Mammary epithelial cell (primary cell): ENCODE measurements at regions of chr14 and their contacts with region 1.

Region 1: DNA sequence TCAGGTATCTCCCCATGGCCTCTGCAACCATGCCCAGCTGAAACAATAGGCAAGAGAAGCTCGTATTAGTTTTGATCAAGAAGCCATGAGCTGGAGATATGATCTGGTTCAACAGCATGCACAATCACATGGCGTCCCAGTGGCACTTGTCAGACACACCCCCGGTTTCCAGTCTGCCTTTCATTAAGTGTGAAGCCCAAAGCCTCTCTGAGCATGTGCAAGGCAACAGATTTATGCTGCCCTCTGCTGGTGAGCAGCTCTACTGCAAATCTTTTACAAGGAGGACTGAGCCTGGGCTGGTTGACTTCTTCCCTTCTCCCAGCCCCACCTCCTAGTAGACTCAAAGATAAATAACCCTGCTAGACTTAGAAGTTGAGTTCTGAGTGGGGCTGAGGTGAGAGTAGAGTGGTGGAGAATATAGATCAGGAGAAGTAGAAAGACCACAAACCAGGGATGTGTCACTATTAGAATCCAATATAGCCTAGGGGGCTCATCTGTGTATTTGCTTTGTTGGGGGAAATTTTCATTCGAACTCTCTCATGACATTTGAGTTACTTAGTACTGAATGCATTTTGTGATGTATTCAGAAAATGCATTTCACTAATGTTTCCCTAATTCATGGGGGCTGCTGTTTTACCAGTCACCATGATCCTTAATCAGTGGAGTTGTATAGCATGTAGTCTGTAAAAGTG is 53.7 kb upstream of the MBIP start:
- DNase-seq: peak; percentile 66
- H3K4me3 ChIP-seq: no peak overlapping the region
- H3K27ac ChIP-seq: no peak overlapping the region
- H3K4me1 ChIP-seq: no peaks in the 10 kb centered on the region
- H3K27me3 ChIP-seq: no peaks in the 10 kb centered on the region
- CTCF ChIP-seq: peak; percentile 89 to 95

Region 2: DNA sequence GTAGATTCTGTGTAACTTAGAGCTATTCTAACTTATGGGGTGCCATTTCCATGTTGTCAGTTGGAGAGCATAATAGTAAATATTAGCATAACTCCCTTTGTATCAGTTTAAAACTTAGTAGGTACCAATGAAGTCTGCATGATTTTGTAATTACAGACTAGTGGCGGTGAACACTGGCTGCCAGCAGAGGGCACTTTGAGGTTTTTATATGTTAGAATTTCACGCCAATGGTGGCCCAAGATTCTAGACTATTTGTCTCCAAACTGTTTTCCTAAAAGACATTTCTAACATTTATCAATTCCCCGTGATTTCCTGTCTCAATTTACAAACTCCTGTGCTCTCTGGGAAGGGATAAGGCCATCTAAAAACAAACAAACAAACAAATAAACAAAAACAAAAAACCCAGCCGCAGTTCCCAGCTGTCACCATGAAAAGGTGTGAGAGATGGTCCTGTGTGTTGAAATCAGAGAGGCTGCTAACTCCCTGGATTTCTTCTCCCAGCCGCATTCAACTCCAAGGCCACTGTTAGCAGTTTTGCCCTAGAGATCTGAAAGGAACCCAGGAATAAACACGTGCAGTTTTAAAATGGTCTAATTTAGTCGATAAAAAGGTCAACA is 490.3 kb before region 1 on chr14:
- CTCF ChIA-PET with region 1: no interaction called
- dilution Hi-C with region 1: no loop called
- in situ Hi-C with region 1: no loop called
- intact Hi-C with region 1: loop called (anchors 1 kb)
- DNase-seq: no peak
- H3K4me3 ChIP-seq: no peak overlapping the region
- H3K27ac ChIP-seq: no peak overlapping the region
- H3K4me1 ChIP-seq: peaks cover 8% of the 10 kb centered on the region
- H3K27me3 ChIP-seq: no peaks in the 10 kb centered on the region
- CTCF ChIP-seq: peak; percentile 72 to 75

Region 3: DNA sequence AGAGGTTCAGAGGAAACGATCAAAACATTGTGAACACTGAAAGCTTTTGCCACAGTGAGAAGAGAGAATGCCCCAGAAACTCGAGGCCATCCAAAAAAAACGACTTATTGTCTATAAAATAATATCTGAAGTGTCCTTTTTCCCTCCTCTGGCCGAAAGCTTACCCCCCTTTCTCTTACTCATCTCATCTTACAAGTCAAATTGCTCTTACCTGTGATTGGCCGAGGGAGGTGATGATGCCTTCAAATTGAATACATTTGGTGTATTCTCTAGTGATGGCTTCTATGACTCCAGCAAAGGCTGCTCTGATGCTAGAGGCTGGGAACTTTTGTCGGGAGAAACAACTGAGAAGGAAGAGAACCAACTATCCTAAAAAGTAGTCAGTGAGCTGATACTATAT is 288.3 kb before region 1 on chr14:
- CTCF ChIA-PET with region 1: no interaction called
- dilution Hi-C with region 1: no loop called
- in situ Hi-C with region 1: loop called in 1 of 2 experiments (anchors 10 kb)
- intact Hi-C with region 1: no loop called
- DNase-seq: no peak
- H3K4me3 ChIP-seq: no peak overlapping the region
- H3K27ac ChIP-seq: no peak overlapping the region
- H3K4me1 ChIP-seq: peaks cover under 1% of the 10 kb centered on the region
- H3K27me3 ChIP-seq: peaks cover 2% of the 10 kb centered on the region
- CTCF ChIP-seq: no peak

Region 4: DNA sequence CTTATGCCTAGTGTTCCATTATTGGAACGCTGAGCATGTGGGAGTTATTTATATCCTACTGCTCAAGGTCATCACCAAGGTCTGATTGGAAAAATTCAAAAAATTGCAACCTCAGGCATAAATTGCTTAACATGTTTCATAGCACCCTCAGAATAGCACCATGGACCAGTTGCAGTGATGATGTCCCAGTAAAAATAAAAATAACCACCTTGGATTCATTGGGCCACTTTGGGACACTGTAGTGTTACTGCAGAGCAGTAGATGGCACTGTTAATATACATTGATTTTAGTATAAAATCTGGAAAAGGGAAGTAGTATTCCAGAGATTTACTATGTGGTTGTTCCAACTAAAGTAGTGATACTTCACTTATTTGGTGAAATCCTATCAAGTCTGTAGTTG is 166.6 kb before region 1 on chr14:
- CTCF ChIA-PET with region 1: no interaction called
- dilution Hi-C with region 1: no loop called
- in situ Hi-C with region 1: no loop called
- intact Hi-C with region 1: loop called (anchors 1 kb)
- DNase-seq: no peak
- H3K4me3 ChIP-seq: no peak overlapping the region
- H3K27ac ChIP-seq: no peak overlapping the region
- H3K4me1 ChIP-seq: no peaks in the 10 kb centered on the region
- H3K27me3 ChIP-seq: peaks cover 2% of the 10 kb centered on the region
- CTCF ChIP-seq: peak; percentile 35 to 52

Region 5: DNA sequence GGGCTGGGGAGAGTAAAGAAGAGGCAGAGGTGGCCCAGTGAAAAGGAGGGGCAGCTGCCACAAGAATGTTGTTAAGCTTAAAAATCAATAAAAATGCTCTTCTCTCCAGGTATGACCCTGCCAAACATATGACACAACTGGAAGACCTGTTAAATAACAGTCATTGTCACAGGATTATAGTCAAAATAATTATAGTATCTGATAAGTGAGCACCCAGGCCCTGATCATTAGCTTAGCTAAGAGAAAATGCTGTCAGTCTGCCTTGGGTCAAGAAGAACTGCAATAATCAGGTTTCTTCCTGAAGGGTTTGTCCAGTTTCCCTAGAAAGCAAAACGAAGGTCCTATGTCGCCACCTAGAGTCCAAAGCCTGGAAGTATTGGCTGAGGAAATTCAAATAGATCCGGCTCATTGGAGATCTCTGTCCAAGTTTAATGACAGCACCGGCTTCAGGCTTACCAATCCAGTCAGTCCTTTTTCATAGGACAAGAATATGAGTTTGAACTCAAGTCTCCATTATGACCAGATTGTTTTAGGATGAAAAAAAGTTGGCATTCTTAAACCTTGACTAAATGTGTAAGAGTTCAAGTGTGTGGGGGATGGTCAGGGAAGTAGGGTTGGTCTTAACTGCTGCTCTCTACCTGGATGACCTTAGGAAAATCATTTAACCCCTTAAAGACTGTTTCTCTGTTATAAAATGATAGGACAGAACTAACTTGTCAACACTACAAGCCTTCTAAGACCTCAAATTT is 230.8 kb after region 1 on chr14:
- CTCF ChIA-PET with region 1: no interaction called
- dilution Hi-C with region 1: no loop called
- in situ Hi-C with region 1: no loop called
- intact Hi-C with region 1: loop called (anchors 10 kb)
- DNase-seq: peak; percentile 66
- H3K4me3 ChIP-seq: no peak overlapping the region
- H3K27ac ChIP-seq: no peak overlapping the region
- H3K4me1 ChIP-seq: no peaks in the 10 kb centered on the region
- H3K27me3 ChIP-seq: no peaks in the 10 kb centered on the region
- CTCF ChIP-seq: peak; percentile 82 to 87